Caco-2 (cell line): ENCODE measurements at regions of chr17 and their contacts with region 1.

Region 1: GRCh38 chr17:55969562-55970324 is 183.5 kb upstream of the ANKFN1 start:
- DNase-seq: no peak
- H3K4me3 ChIP-seq: no peak overlapping the region
- H3K4me3 Mint-ChIP-seq: no peak overlapping the region
- H3K27ac Mint-ChIP-seq: no peak overlapping the region
- H3K4me1 ChIP-seq: no peaks in the 10 kb centered on the region
- H3K4me1 Mint-ChIP-seq: no peaks in the 10 kb centered on the region
- H3K27me3 ChIP-seq: peaks cover 1% of the 10 kb centered on the region
- H3K27me3 Mint-ChIP-seq: peaks cover 11% of the 10 kb centered on the region
- CTCF ChIP-seq: no peak

Region 2: GRCh38 chr17:56034201-56034635 is 64.5 kb after region 1 on chr17:
- CTCF ChIA-PET with region 1: no interaction called
- POLR2A ChIA-PET with region 1: no interaction called
- intact Hi-C with region 1: no loop called
- DNase-seq: no peak
- H3K4me3 ChIP-seq: no peak overlapping the region
- H3K4me3 Mint-ChIP-seq: no peak overlapping the region
- H3K27ac Mint-ChIP-seq: no peak overlapping the region
- H3K4me1 ChIP-seq: no peaks in the 10 kb centered on the region
- H3K4me1 Mint-ChIP-seq: no peaks in the 10 kb centered on the region
- H3K27me3 ChIP-seq: no peaks in the 10 kb centered on the region
- H3K27me3 Mint-ChIP-seq: peaks cover 16% of the 10 kb centered on the region
- CTCF ChIP-seq: no peak

Region 3: DNA sequence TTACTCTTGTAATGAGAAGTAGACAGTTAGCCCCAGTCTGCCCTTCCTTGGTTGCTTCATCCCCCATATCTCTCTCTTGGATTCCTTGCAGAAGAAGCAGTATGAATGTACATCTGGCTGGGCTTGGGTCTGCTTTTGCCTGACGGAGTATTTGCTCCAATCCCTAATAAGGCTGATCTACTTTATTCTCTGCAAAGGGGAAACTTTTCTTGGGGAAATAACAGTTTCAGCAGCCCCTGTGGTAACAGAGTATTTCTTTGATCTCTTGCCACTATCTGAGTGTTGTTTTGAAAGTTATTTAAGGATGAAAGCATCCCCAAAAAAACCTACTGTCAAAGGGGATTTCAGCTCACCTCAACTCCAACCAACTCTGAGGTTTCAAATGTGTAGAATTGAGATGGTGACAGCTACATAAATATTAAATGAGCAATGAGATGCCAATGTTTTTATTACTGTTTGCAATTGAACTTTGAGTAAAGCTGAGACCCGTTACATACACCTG is 454.9 kb after region 1 on chr17:
- CTCF ChIA-PET with region 1: no interaction called
- POLR2A ChIA-PET with region 1: interaction called, 10 read pairs
- intact Hi-C with region 1: no loop called
- DNase-seq: no peak
- H3K4me3 ChIP-seq: no peak overlapping the region
- H3K4me3 Mint-ChIP-seq: no peak overlapping the region
- H3K27ac Mint-ChIP-seq: no peak overlapping the region
- H3K4me1 ChIP-seq: no peaks in the 10 kb centered on the region
- H3K4me1 Mint-ChIP-seq: peaks cover 6% of the 10 kb centered on the region
- H3K27me3 ChIP-seq: no peaks in the 10 kb centered on the region
- H3K27me3 Mint-ChIP-seq: no peaks in the 10 kb centered on the region
- CTCF ChIP-seq: no peak